GM12878 (cell line): ENCODE measurements at regions of chr7 and their contacts with region 1.

Region 1: GRCh38 chr7:105652359-105652993 is 71.2 kb upstream of the EFCAB10 start:
- DNase-seq: no peak
- ATAC-seq: peak; percentile 98
- H3K4me3 ChIP-seq: no peak overlapping the region
- H3K27ac ChIP-seq: no peak overlapping the region
- H3K4me1 ChIP-seq: no peaks in the 10 kb centered on the region
- H3K27me3 ChIP-seq: no peaks in the 10 kb centered on the region; a peak in 2 of 4 replicates
- CTCF ChIP-seq: peak; percentile 83 to 93 (median 87)
- EP300 ChIP-seq: no peak
- POLR2A ChIP-seq: no peak
- RAD21 ChIP-seq: peak; percentile 70

Region 2: GRCh38 chr7:105675934-105676371 is 23.5 kb after region 1 on chr7:
- CTCF ChIA-PET with region 1: interaction called, 23 read pairs
- POLR2A ChIA-PET with region 1: no interaction called
- RAD21 ChIA-PET with region 1: interaction called, 3 read pairs
- SMC1A ChIA-PET with region 1: no interaction called
- in situ Hi-C with region 1: no loop called
- intact Hi-C with region 1: no loop called
- DNase-seq: no peak
- ATAC-seq: no peak
- H3K4me3 ChIP-seq: no peak overlapping the region
- H3K27ac ChIP-seq: no peak overlapping the region
- H3K4me1 ChIP-seq: peaks cover 15% of the 10 kb centered on the region
- H3K27me3 ChIP-seq: no peaks in the 10 kb centered on the region
- CTCF ChIP-seq: no peak
- EP300 ChIP-seq: no peak
- POLR2A ChIP-seq: no peak
- RAD21 ChIP-seq: no peak

Region 3: GRCh38 chr7:105885387-105886111 is 233.1 kb after region 1 on chr7:
- CTCF ChIA-PET with region 1: no interaction called
- POLR2A ChIA-PET with region 1: no interaction called
- RAD21 ChIA-PET with region 1: no interaction called
- SMC1A ChIA-PET with region 1: no interaction called
- in situ Hi-C with region 1: no loop called
- intact Hi-C with region 1: loop called (anchors 10 kb)
- DNase-seq: no peak
- ATAC-seq: no peak
- H3K4me3 ChIP-seq: no peak overlapping the region
- H3K27ac ChIP-seq: no peak overlapping the region
- H3K4me1 ChIP-seq: no peaks in the 10 kb centered on the region
- H3K27me3 ChIP-seq: peaks cover 0 to 3% of the 10 kb centered on the region in 2 experiments; a peak in 2 of 4 replicates
- CTCF ChIP-seq: no peak
- EP300 ChIP-seq: no peak
- POLR2A ChIP-seq: no peak
- RAD21 ChIP-seq: no peak

Region 4: DNA sequence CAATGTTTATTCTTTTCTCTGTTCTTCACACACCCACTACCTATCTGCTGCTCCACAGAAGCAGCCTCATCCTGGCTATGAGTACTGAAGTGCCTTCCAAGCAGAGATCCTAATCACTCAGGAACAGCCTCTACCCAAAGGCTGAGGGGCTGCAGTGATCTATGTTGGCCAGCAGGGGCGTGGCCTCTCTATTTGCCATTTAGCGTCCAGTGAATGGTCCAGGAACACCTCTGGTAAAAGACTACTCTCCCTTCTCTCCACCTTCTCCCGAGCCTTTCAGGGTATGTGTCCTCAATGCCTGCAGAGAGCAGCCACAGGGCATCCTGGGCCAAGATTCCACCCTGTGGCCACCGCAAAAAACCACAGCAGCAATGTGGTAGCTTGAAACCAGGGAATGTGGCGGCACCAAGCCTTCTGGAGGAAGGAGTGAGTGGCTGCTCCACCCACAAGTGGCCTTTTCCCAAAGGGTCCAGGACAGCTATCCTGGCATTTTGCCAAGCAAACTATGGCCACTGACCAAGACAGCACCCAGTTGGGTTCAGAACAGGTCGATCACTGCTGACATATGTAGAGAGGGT is 388.8 kb after region 1 on chr7:
- CTCF ChIA-PET with region 1: interaction called, 9 read pairs
- POLR2A ChIA-PET with region 1: no interaction called
- RAD21 ChIA-PET with region 1: interaction called, 9 read pairs
- SMC1A ChIA-PET with region 1: interaction called, 12 read pairs
- in situ Hi-C with region 1: no loop called
- intact Hi-C with region 1: loop called (anchors 1 kb)
- DNase-seq: no peak
- ATAC-seq: peak; percentile 82
- H3K4me3 ChIP-seq: no peak overlapping the region
- H3K27ac ChIP-seq: no peak overlapping the region
- H3K4me1 ChIP-seq: no peaks in the 10 kb centered on the region
- H3K27me3 ChIP-seq: peaks cover 0 to 6% of the 10 kb centered on the region in 2 experiments; a peak in 2 of 4 replicates
- CTCF ChIP-seq: peak; percentile 56 to 85 (median 82)
- EP300 ChIP-seq: no peak
- POLR2A ChIP-seq: no peak
- RAD21 ChIP-seq: peak; percentile 20; the same call in 1 of the 2 replicates